Activated CD4-positive, alpha-beta memory T cell treated with anti-CD3 and anti-CD28 coated beads for 36 hours (primary cell): ENCODE measurements at regions of chr11 and their contacts with region 1.

Region 1: DNA sequence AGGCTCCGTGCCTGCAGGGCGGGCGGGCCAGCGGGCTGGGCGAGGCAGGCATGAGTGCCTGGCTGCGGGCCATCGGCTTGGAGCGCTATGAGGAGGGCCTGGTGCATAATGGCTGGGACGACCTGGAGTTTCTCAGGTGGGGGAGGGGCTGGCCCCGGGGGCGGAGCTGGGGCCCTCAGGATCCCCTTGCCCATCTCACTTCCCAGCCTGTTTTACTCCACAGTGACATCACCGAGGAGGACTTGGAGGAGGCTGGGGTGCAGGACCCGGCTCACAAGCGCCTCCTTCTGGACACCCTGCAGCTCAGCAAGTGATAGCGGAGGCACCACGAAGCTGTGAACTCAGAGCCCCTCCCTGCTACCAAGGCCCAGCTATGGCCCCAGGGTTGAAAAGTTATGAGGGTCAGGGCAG is 5.9 kb downstream of the PHOX2A start:
- DNase-seq: peak; percentile 72
- H3K4me3 Mint-ChIP-seq: no peak overlapping the region
- H3K27ac Mint-ChIP-seq: no peak overlapping the region
- H3K4me1 Mint-ChIP-seq: peaks cover 12% of the 10 kb centered on the region
- H3K27me3 Mint-ChIP-seq: peaks cover 33% of the 10 kb centered on the region

Region 2: GRCh38 chr11:72179804-72180396 is 58.1 kb before region 1 on chr11:
- CTCF ChIA-PET with region 1: interaction called, 12 read pairs
- POLR2A ChIA-PET with region 1: no interaction called
- intact Hi-C with region 1: no loop called
- DNase-seq: peak; percentile 22
- H3K4me3 Mint-ChIP-seq: no peak overlapping the region
- H3K27ac Mint-ChIP-seq: no peak overlapping the region
- H3K4me1 Mint-ChIP-seq: peaks cover 14% of the 10 kb centered on the region
- H3K27me3 Mint-ChIP-seq: peaks cover 6% of the 10 kb centered on the region